Endothelial cell of umbilical vein (primary cell): ENCODE measurements at regions of chr15 and their contacts with region 1.

Region 1: DNA sequence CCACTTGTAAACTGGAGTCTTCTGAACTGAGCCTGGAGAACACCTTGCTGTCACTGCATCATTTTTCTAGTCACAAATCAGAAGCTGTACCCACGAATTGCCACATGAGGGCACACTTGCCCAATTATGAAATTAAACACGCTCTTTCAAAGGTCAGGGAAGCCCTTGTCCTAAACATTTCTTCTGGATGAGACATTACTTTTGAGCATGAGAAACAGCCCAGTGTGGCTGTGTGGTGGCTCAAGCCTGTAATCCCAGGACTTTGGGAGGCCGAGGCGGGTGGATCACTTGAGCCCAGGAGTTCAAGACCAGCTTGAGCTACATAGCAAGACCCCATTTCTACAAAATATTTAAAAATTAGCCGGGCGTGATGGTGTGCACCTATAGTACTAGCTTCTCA is 27.5 kb upstream of the CFAP161 start:
- DNase-seq: peak; percentile 78
- H3K4me3 ChIP-seq: no peak overlapping the region
- H3K27ac ChIP-seq: no peak overlapping the region
- H3K4me1 ChIP-seq: peaks cover 7% of the 10 kb centered on the region
- H3K27me3 ChIP-seq: peaks cover 0 to 2% of the 10 kb centered on the region in 2 experiments
- CTCF ChIP-seq: peak; percentile 66 to 73
- POLR2A ChIP-seq: no peak

Region 2: GRCh38 chr15:80977627-80978036 is 128.9 kb before region 1 on chr15:
- CTCF ChIA-PET with region 1: interaction called, 52 read pairs
- POLR2A ChIA-PET with region 1: no interaction called
- dilution Hi-C with region 1: no loop called
- intact Hi-C with region 1: loop called (anchors 1 kb)
- DNase-seq: peak; percentile 62
- H3K4me3 ChIP-seq: no peak overlapping the region
- H3K27ac ChIP-seq: no peak overlapping the region
- H3K4me1 ChIP-seq: peaks cover 10% of the 10 kb centered on the region
- H3K27me3 ChIP-seq: no peaks in the 10 kb centered on the region
- CTCF ChIP-seq: peak; percentile 63 to 83
- POLR2A ChIP-seq: no peak

Region 3: GRCh38 chr15:81000624-81001151 is 105.9 kb before region 1 on chr15 and contains the start of gene TLNRD1:
- CTCF ChIA-PET with region 1: interaction called, 114 read pairs
- POLR2A ChIA-PET with region 1: interaction called, 4 read pairs
- dilution Hi-C with region 1: no loop called
- intact Hi-C with region 1: loop called (anchors 1 kb)
- DNase-seq: peak; percentile 92
- H3K4me3 ChIP-seq: peak within 1 kb of the TSS; percentile 73 to 87 (median 75)
- H3K27ac ChIP-seq: peak within 1 kb of the TSS; percentile 85
- H3K4me1 ChIP-seq: peaks cover 35% of the 10 kb centered on the region
- H3K27me3 ChIP-seq: no peaks in the 10 kb centered on the region
- CTCF ChIP-seq: no peak
- POLR2A ChIP-seq: peak; percentile 91
- total RNA-seq, gene TLNRD1: 33.0 and 33.2 TPM in 2 replicates

Region 4: DNA sequence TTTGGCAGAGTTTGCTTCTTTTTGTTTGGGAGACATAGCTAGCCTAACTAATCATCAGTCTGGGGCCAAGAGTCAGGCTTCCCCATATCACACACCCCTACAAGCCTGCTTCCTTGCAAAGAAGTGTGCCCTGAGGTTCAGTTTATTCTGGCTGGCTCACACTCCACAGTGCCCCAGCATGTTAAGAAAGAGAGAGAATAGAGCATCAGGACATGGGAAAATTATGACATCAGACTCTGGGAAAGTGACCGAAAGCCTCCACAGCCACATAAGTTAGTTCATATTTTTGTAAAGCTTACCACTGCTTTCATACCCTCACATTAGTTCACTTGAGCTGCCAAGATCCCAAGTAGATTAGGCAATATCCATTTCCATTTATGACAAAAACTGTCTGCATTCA is 35.4 kb before region 1 on chr15:
- CTCF ChIA-PET with region 1: interaction called, 13 read pairs
- POLR2A ChIA-PET with region 1: no interaction called
- dilution Hi-C with region 1: no loop called
- intact Hi-C with region 1: loop called (anchors 2 kb)
- DNase-seq: peak; percentile 85
- H3K4me3 ChIP-seq: no peak overlapping the region
- H3K27ac ChIP-seq: no peak overlapping the region
- H3K4me1 ChIP-seq: peaks cover 16% of the 10 kb centered on the region
- H3K27me3 ChIP-seq: no peaks in the 10 kb centered on the region
- CTCF ChIP-seq: no peak
- POLR2A ChIP-seq: no peak

Region 5: GRCh38 chr15:81155375-81156218 is 49.0 kb after region 1 on chr15:
- CTCF ChIA-PET with region 1: interaction called, 36 read pairs
- POLR2A ChIA-PET with region 1: no interaction called
- dilution Hi-C with region 1: no loop called
- intact Hi-C with region 1: loop called (anchors 5 kb)
- DNase-seq: peak; percentile 41
- H3K4me3 ChIP-seq: no peak overlapping the region
- H3K27ac ChIP-seq: no peak overlapping the region
- H3K4me1 ChIP-seq: no peaks in the 10 kb centered on the region
- H3K27me3 ChIP-seq: no peaks in the 10 kb centered on the region
- CTCF ChIP-seq: peak; percentile 28 to 37
- POLR2A ChIP-seq: no peak

Region 6: GRCh38 chr15:81225161-81225671 is 118.7 kb after region 1 on chr15:
- CTCF ChIA-PET with region 1: no interaction called
- POLR2A ChIA-PET with region 1: no interaction called
- dilution Hi-C with region 1: no loop called
- intact Hi-C with region 1: no loop called
- DNase-seq: no peak
- H3K4me3 ChIP-seq: no peak overlapping the region
- H3K27ac ChIP-seq: no peak overlapping the region
- H3K4me1 ChIP-seq: no peaks in the 10 kb centered on the region
- H3K27me3 ChIP-seq: peaks cover 0 to 3% of the 10 kb centered on the region in 2 experiments
- CTCF ChIP-seq: no peak
- POLR2A ChIP-seq: no peak